Activated B cell treated with CpG ODN at 0.5 μM for 24 hours (primary cell): ENCODE measurements at regions of chr19 and their contacts with region 1.

Region 1: GRCh38 chr19:21505459-21506451 is at the start of gene ZNF429:
- DNase-seq: peak; percentile 73
- ATAC-seq: peak; percentile 99
- H3K4me3 Mint-ChIP-seq: peak within 1 kb of the TSS; percentile 100
- H3K27ac Mint-ChIP-seq: peak within 1 kb of the TSS; percentile 99
- H3K4me1 Mint-ChIP-seq: peaks cover 38% of the 10 kb centered on the region
- H3K27me3 Mint-ChIP-seq: no peaks in the 10 kb centered on the region
- CTCF ChIP-seq: no peak
- total RNA-seq, gene ZNF429: 19.5 and 19.9 TPM in 2 replicates

Region 2: DNA sequence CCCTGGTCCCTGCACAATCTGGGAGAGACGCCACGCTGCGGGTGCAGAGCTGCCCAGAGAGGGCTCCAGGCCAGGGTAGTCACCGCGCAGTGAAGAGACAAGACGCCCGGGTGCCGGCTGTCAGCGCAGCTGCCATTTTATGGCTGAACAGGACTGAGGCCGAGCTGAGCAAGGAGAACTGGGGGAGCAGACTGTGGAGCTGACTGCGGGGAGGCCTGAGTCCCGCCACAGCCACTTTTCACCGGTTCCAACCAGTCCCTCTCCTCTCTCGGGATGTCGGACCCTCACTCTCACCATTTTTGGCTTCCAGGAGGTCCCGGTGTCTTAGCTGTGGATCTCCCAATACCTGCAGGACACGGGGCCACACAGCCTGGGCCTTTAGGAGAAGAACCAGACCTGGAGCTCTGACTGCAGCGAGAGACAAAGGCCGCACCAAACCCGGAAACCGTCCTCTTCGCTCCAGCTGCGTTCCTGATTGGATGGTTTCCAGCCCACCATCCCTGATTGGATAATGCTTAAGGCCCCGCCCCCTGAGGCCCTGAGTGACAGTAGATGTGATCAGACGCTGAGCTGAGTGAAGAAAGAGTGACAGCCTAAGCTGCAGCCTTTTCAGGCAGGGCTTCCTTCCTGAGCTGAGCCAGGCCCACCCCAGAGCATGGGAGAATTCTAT is 844.5 kb before region 1 on chr19 and contains the start of gene ZNF626:
- CTCF ChIA-PET with region 1: no interaction called
- POLR2A ChIA-PET with region 1: interaction called, 6 read pairs
- intact Hi-C with region 1: loop called (anchors 10 kb)
- DNase-seq: peak; percentile 80
- ATAC-seq: peak; percentile 98
- H3K4me3 Mint-ChIP-seq: peak within 1 kb of the TSS; percentile 95
- H3K27ac Mint-ChIP-seq: peak within 1 kb of the TSS; percentile 95
- H3K4me1 Mint-ChIP-seq: peaks cover 49% of the 10 kb centered on the region
- H3K27me3 Mint-ChIP-seq: no peaks in the 10 kb centered on the region
- CTCF ChIP-seq: no peak
- total RNA-seq, gene ZNF626: 16.1 and 17.2 TPM in 2 replicates

Region 3: GRCh38 chr19:21141787-21142464 is 363.8 kb before region 1 on chr19 and contains the start of gene ZNF431:
- CTCF ChIA-PET with region 1: no interaction called
- POLR2A ChIA-PET with region 1: interaction called, 15 read pairs
- intact Hi-C with region 1: no loop called
- DNase-seq: peak; percentile 73
- ATAC-seq: peak; percentile 99
- H3K4me3 Mint-ChIP-seq: peak within 1 kb of the TSS; percentile 100
- H3K27ac Mint-ChIP-seq: peak within 1 kb of the TSS; percentile 98
- H3K4me1 Mint-ChIP-seq: peaks cover 32% of the 10 kb centered on the region
- H3K27me3 Mint-ChIP-seq: no peaks in the 10 kb centered on the region
- CTCF ChIP-seq: no peak
- total RNA-seq, gene ZNF431: 33.2 and 34.9 TPM in 2 replicates

Region 4: DNA sequence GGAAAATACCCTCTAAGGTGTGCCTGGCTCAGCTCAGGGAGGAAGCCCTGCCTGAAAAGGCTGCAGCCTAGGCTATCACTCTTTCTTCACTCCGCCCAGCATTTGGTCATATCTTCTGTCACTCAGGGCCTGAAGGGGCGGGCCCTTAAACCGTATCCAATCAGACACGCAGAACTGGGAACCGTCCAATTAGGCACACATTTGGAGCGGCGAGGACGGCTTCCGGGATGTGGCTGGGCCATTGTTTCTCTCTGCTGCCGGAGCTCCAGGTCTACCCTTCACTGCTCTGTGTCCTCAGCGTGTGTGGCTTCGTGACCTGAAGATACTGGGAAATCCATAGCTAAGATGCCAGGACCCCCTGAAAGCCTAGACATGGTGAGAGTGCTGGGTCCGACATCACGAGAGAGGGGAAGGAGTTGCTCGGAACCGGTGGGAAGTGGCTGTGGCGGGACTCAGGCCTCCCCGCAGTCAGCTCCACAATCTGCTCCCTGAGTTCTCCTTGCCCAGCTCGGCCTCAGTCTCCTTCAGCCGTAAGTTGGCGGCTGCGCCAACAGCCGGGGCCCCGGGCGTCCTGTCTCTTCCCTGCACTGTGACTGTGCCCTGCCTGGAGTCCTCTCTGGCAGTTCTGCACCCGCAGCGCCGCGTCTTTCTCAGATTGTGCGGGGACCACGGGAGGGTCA is 108.7 kb before region 1 on chr19 and contains the start of gene ZNF493:
- CTCF ChIA-PET with region 1: no interaction called
- POLR2A ChIA-PET with region 1: interaction called, 23 read pairs
- intact Hi-C with region 1: loop called (anchors 1 kb)
- DNase-seq: peak; percentile 75
- ATAC-seq: peak; percentile 100
- H3K4me3 Mint-ChIP-seq: peak within 1 kb of the TSS; percentile 99
- H3K27ac Mint-ChIP-seq: peak within 1 kb of the TSS; percentile 91
- H3K4me1 Mint-ChIP-seq: peaks cover 29% of the 10 kb centered on the region
- H3K27me3 Mint-ChIP-seq: no peaks in the 10 kb centered on the region
- CTCF ChIP-seq: no peak
- total RNA-seq, gene ZNF493: 45.0 and 52.7 TPM in 2 replicates

Region 5: GRCh38 chr19:21835810-21836444 is 330.2 kb after region 1 on chr19 and contains the start of gene ZNF43:
- CTCF ChIA-PET with region 1: no interaction called
- POLR2A ChIA-PET with region 1: interaction called, 27 read pairs
- intact Hi-C with region 1: loop called (anchors 5 kb)
- DNase-seq: peak; percentile 77
- ATAC-seq: peak; percentile 98
- H3K4me3 Mint-ChIP-seq: peak within 1 kb of the TSS; percentile 100
- H3K27ac Mint-ChIP-seq: peak within 1 kb of the TSS; percentile 100
- H3K4me1 Mint-ChIP-seq: peaks cover 38% of the 10 kb centered on the region
- H3K27me3 Mint-ChIP-seq: no peaks in the 10 kb centered on the region
- CTCF ChIP-seq: no peak
- total RNA-seq, gene ZNF43: 41.8 and 52.4 TPM in 2 replicates